Caco-2 (cell line): ENCODE measurements at regions of chr17 and their contacts with region 1.

Region 1: GRCh38 chr17:75549221-75550138 is 24.0 kb downstream of the LLGL2 start:
- DNase-seq: peak; percentile 69 to 78
- H3K4me3 ChIP-seq: no peak overlapping the region
- H3K4me3 Mint-ChIP-seq: no peak overlapping the region
- H3K27ac Mint-ChIP-seq: peak overlapping the region; percentile 68
- H3K4me1 ChIP-seq: peaks cover 48% of the 10 kb centered on the region
- H3K4me1 Mint-ChIP-seq: peaks cover 22% of the 10 kb centered on the region
- H3K27me3 ChIP-seq: no peaks in the 10 kb centered on the region
- H3K27me3 Mint-ChIP-seq: no peaks in the 10 kb centered on the region
- CTCF ChIP-seq: no peak

Region 2: DNA sequence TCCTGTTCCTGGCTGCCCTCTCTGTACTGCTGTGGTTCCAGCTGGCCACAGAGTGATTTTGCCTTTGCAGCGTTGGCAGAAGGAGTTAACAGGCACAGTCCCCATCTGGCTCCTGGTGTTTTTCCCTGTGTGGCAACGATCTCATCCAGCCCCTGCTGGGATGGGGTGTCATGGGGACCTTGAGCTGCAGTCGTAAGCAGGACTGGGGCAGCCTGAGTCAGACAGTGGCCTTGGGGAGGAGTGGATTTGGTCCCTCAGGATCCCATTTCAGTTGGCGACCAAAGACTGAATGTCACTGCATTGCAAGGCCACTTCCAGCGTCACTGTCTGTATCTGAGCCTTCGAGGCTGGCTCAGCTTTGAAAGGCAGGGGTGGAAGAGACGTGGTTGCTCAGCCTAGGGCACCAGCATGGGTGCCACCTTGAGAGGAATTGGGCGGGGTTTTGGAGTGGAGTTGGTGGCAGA is 81.2 kb before region 1 on chr17:
- CTCF ChIA-PET with region 1: no interaction called
- POLR2A ChIA-PET with region 1: no interaction called
- intact Hi-C with region 1: no loop called
- DNase-seq: no peak
- H3K4me3 ChIP-seq: no peak overlapping the region
- H3K4me3 Mint-ChIP-seq: no peak overlapping the region
- H3K27ac Mint-ChIP-seq: no peak overlapping the region
- H3K4me1 ChIP-seq: 0 out of 2 replicates have a peak, but pooled peaks cover 1% of the 10 kb centered on the region
- H3K4me1 Mint-ChIP-seq: no peaks in the 10 kb centered on the region
- H3K27me3 ChIP-seq: no peaks in the 10 kb centered on the region
- H3K27me3 Mint-ChIP-seq: no peaks in the 10 kb centered on the region
- CTCF ChIP-seq: no peak

Region 3: GRCh38 chr17:75524953-75525719 is 24.3 kb before region 1 on chr17 and contains the start of gene LLGL2:
- CTCF ChIA-PET with region 1: interaction called, 14 read pairs
- POLR2A ChIA-PET with region 1: interaction called, 8 read pairs
- intact Hi-C with region 1: no loop called
- DNase-seq: peak; percentile 95 to 98
- H3K4me3 ChIP-seq: peak within 1 kb of the TSS; percentile 68
- H3K4me3 Mint-ChIP-seq: peak within 1 kb of the TSS; percentile 92
- H3K27ac Mint-ChIP-seq: peak within 1 kb of the TSS; percentile 76
- H3K4me1 ChIP-seq: peaks cover 5% of the 10 kb centered on the region; the same call in 1 of the 2 replicates
- H3K4me1 Mint-ChIP-seq: peaks cover 16% of the 10 kb centered on the region
- H3K27me3 ChIP-seq: no peaks in the 10 kb centered on the region
- H3K27me3 Mint-ChIP-seq: no peaks in the 10 kb centered on the region
- CTCF ChIP-seq: peak; percentile 47 to 54
- total RNA-seq, gene LLGL2: 165 and 179 TPM in 2 replicates

Region 4: GRCh38 chr17:75535119-75535537 is 14.4 kb before region 1 on chr17:
- CTCF ChIA-PET with region 1: interaction called, 3 read pairs
- POLR2A ChIA-PET with region 1: no interaction called
- intact Hi-C with region 1: loop called (anchors 1 kb)
- DNase-seq: peak in 1 of 2 experiments; percentile 52
- H3K4me3 ChIP-seq: no peak overlapping the region
- H3K4me3 Mint-ChIP-seq: peak overlapping the region; percentile 63
- H3K27ac Mint-ChIP-seq: peak overlapping the region; percentile 95
- H3K4me1 ChIP-seq: peaks cover 68% of the 10 kb centered on the region
- H3K4me1 Mint-ChIP-seq: peaks cover 52% of the 10 kb centered on the region
- H3K27me3 ChIP-seq: no peaks in the 10 kb centered on the region
- H3K27me3 Mint-ChIP-seq: no peaks in the 10 kb centered on the region
- CTCF ChIP-seq: no peak